ENCODE measurements at regions of chrX and their contacts with region 1.

Region 1: GRCh38 chrX:6738518-6739470 is 203.9 kb upstream of the VCX3A start:
- DNase-seq: peak; percentile 93
- ATAC-seq: peak; percentile 98
- H3K4me3 ChIP-seq: no peak overlapping the region
- H3K27ac ChIP-seq: peak overlapping the region; percentile 88
- H3K4me1 ChIP-seq: peaks cover 15% of the 10 kb centered on the region
- H3K27me3 ChIP-seq: no peaks in the 10 kb centered on the region
- CTCF ChIP-seq: no peak
- EP300 ChIP-seq: peak; percentile 96 to 98
- POLR2A ChIP-seq: no peak
- RAD21 ChIP-seq: no peak; the same call in 1 of the 2 replicates

Region 2: GRCh38 chrX:6448003-6448402 is 290.8 kb before region 1 on chrX:
- CTCF ChIA-PET with region 1: no interaction called
- POLR2A ChIA-PET with region 1: no interaction called
- RAD21 ChIA-PET with region 1: no interaction called
- SMC1A ChIA-PET with region 1: no interaction called
- in situ Hi-C with region 1: no loop called
- intact Hi-C with region 1: no loop called
- DNase-seq: no peak
- ATAC-seq: no peak
- H3K4me3 ChIP-seq: no peak overlapping the region
- H3K27ac ChIP-seq: no peak overlapping the region
- H3K4me1 ChIP-seq: no peaks in the 10 kb centered on the region
- H3K27me3 ChIP-seq: no peaks in the 10 kb centered on the region
- CTCF ChIP-seq: no peak
- EP300 ChIP-seq: no peak
- POLR2A ChIP-seq: no peak
- RAD21 ChIP-seq: no peak

Region 3: GRCh38 chrX:6778544-6779414 is 40.0 kb after region 1 on chrX:
- CTCF ChIA-PET with region 1: no interaction called
- POLR2A ChIA-PET with region 1: no interaction called
- RAD21 ChIA-PET with region 1: no interaction called
- SMC1A ChIA-PET with region 1: no interaction called
- in situ Hi-C with region 1: no loop called
- intact Hi-C with region 1: no loop called
- DNase-seq: no peak
- ATAC-seq: no peak
- H3K4me3 ChIP-seq: no peak overlapping the region
- H3K27ac ChIP-seq: no peak overlapping the region
- H3K4me1 ChIP-seq: no peaks in the 10 kb centered on the region
- H3K27me3 ChIP-seq: no peaks in the 10 kb centered on the region
- CTCF ChIP-seq: no peak
- EP300 ChIP-seq: no peak
- POLR2A ChIP-seq: no peak
- RAD21 ChIP-seq: no peak

Region 4: GRCh38 chrX:7083468-7084396 is 344.9 kb after region 1 on chrX:
- CTCF ChIA-PET with region 1: no interaction called
- POLR2A ChIA-PET with region 1: interaction called, 4 read pairs
- RAD21 ChIA-PET with region 1: interaction called, 9 read pairs
- SMC1A ChIA-PET with region 1: interaction called, 7 read pairs
- in situ Hi-C with region 1: no loop called
- intact Hi-C with region 1: loop called (anchors 1 kb)
- DNase-seq: peak; percentile 84
- ATAC-seq: peak; percentile 85
- H3K4me3 ChIP-seq: no peak overlapping the region; the same call in 1 of the 2 replicates
- H3K27ac ChIP-seq: peak overlapping the region; percentile 46
- H3K4me1 ChIP-seq: peaks cover 45% of the 10 kb centered on the region
- H3K27me3 ChIP-seq: no peaks in the 10 kb centered on the region
- CTCF ChIP-seq: no peak
- EP300 ChIP-seq: peak; percentile 94
- POLR2A ChIP-seq: no peak
- RAD21 ChIP-seq: no peak

Region 5: GRCh38 chrX:7261672-7262332 is 523.0 kb after region 1 on chrX:
- CTCF ChIA-PET with region 1: no interaction called
- POLR2A ChIA-PET with region 1: no interaction called
- RAD21 ChIA-PET with region 1: no interaction called
- SMC1A ChIA-PET with region 1: no interaction called
- in situ Hi-C with region 1: no loop called
- intact Hi-C with region 1: loop called (anchors 5 kb)
- DNase-seq: peak; percentile 57
- ATAC-seq: peak; percentile 92
- H3K4me3 ChIP-seq: no peak overlapping the region
- H3K27ac ChIP-seq: peak overlapping the region; percentile 13; the same call in 1 of the 2 replicates
- H3K4me1 ChIP-seq: peaks cover 18% of the 10 kb centered on the region
- H3K27me3 ChIP-seq: no peaks in the 10 kb centered on the region
- CTCF ChIP-seq: no peak
- EP300 ChIP-seq: peak; percentile 92 to 96
- POLR2A ChIP-seq: no peak
- RAD21 ChIP-seq: no peak

Region 6: DNA sequence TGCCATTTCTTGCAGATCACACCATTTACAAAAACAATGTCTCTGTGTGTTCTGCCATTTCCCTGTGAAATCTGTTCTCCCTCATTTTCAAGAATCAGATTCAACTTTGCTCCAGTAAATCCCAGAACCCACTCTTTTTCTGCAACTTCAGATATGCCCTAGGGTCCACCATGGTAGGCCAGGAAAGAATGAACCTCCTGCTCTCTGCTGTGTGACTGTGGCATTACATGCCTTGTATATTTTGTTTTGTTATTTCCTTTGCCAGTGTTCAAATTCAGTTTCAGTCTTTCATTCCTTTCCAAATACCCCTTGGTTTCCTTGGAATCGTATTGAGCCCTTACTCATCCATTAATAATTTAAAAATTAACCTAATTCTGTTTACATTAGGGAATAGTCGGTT is 814.0 kb after region 1 on chrX:
- CTCF ChIA-PET with region 1: no interaction called
- POLR2A ChIA-PET with region 1: no interaction called
- RAD21 ChIA-PET with region 1: no interaction called
- SMC1A ChIA-PET with region 1: no interaction called
- in situ Hi-C with region 1: no loop called
- intact Hi-C with region 1: no loop called
- DNase-seq: no peak
- ATAC-seq: no peak
- H3K4me3 ChIP-seq: no peak overlapping the region
- H3K27ac ChIP-seq: no peak overlapping the region
- H3K4me1 ChIP-seq: no peaks in the 10 kb centered on the region
- H3K27me3 ChIP-seq: no peaks in the 10 kb centered on the region
- CTCF ChIP-seq: no peak; a peak in 1 of 6 replicates
- EP300 ChIP-seq: no peak
- POLR2A ChIP-seq: no peak
- RAD21 ChIP-seq: peak; percentile 50